ENCODE measurements at regions of chr4 and their contacts with region 1.

Region 1: GRCh38 chr4:2971275-2971674 is 7.9 kb downstream of the GRK4 start:
- DNase-seq: no peak
- H3K4me3 ChIP-seq: no peak overlapping the region
- H3K27ac ChIP-seq: no peak overlapping the region
- H3K4me1 ChIP-seq: no peaks in the 10 kb centered on the region
- H3K27me3 ChIP-seq: no peaks in the 10 kb centered on the region
- CTCF ChIP-seq: no peak

Region 2: GRCh38 chr4:2741626-2742025 is 229.6 kb before region 1 on chr4:
- CTCF ChIA-PET with region 1: no interaction called
- dilution Hi-C with region 1: no loop called
- in situ Hi-C with region 1: no loop called
- intact Hi-C with region 1: no loop called
- DNase-seq: no peak
- H3K4me3 ChIP-seq: no peak overlapping the region
- H3K27ac ChIP-seq: no peak overlapping the region
- H3K4me1 ChIP-seq: peaks cover 15% of the 10 kb centered on the region
- H3K27me3 ChIP-seq: no peaks in the 10 kb centered on the region
- CTCF ChIP-seq: no peak

Region 3: GRCh38 chr4:2817701-2818350 is 153.4 kb before region 1 on chr4:
- CTCF ChIA-PET with region 1: no interaction called
- dilution Hi-C with region 1: no loop called
- in situ Hi-C with region 1: no loop called
- intact Hi-C with region 1: no loop called
- DNase-seq: peak; percentile 38
- H3K4me3 ChIP-seq: peak overlapping the region; percentile 11 to 75 (median 68)
- H3K27ac ChIP-seq: no peak overlapping the region
- H3K4me1 ChIP-seq: peaks cover 9% of the 10 kb centered on the region
- H3K27me3 ChIP-seq: no peaks in the 10 kb centered on the region
- CTCF ChIP-seq: no peak

Region 4: DNA sequence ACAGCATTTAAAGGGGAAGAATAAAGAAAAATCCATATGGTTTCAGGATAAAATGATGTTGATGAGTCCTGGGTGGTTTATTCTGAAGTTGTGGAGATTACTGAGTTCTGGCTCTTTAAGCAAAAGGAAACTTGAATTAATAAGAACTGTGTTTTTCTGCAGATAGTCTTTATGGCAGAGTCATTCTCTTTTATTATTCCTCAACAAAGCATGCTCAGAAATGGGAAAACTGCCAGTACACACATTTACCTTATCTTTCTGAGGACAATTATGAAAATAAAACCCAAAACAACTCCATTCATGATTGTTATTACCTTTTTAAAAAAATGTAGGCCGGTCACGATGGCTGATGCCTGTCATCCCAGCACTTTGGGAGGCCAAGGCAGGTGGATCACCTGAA is 69.1 kb before region 1 on chr4:
- CTCF ChIA-PET with region 1: no interaction called
- dilution Hi-C with region 1: loop called (anchors 5 kb)
- in situ Hi-C with region 1: no loop called
- intact Hi-C with region 1: no loop called
- DNase-seq: no peak
- H3K4me3 ChIP-seq: no peak overlapping the region
- H3K27ac ChIP-seq: no peak overlapping the region
- H3K4me1 ChIP-seq: no peaks in the 10 kb centered on the region
- H3K27me3 ChIP-seq: no peaks in the 10 kb centered on the region
- CTCF ChIP-seq: no peak

Region 5: DNA sequence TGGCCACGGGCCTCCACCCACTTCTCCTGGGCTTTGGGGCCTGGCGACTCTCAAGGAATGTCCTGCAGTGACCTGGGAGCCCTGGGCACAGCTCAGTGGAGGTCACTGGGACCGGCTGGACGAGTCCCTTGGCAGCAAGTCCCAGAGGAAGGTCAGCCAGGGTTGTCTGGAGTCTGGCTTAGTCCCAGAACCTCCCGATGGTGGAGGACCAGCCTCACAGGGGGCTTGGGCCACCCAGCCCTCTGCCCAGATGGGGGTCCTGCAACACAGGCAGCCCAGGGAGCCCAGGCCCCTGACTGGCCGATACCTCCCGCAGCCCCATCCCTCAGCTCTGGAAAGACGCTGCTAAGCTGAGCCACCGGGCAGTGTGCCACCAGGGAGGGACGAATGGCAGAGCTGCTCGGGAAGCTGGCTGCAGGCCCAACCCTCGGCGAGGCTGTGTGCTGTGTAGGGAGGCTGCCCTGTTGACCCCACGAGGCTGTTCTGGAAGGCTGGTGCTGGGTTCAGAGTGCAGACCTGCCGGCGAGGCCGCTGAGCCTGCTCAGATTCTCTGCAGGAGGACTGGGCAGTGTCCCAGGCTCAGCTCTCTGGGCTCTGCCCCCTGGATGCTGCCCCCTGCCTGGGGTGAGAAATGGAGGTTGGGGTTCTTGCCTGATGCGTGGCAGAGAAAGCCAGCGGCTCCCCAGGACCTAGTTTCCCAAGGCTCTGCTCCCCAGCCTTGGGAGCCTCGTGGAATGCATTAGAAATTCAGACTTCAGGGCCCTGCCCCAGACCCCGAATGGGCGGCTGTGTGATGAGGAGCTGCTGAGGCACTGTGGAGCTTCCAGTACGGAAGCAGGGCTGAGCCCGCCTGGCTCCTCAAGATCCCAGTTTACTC is 856.6 kb after region 1 on chr4:
- CTCF ChIA-PET with region 1: no interaction called
- dilution Hi-C with region 1: no loop called
- in situ Hi-C with region 1: no loop called
- intact Hi-C with region 1: no loop called
- DNase-seq: no peak
- H3K4me3 ChIP-seq: no peak overlapping the region
- H3K27ac ChIP-seq: no peak overlapping the region
- H3K4me1 ChIP-seq: no peaks in the 10 kb centered on the region
- H3K27me3 ChIP-seq: no peaks in the 10 kb centered on the region
- CTCF ChIP-seq: no peak